Sigmoid colon (tissue), 7 donors: ENCODE measurements at regions of chr13 and their contacts with region 1.

Region 1: DNA sequence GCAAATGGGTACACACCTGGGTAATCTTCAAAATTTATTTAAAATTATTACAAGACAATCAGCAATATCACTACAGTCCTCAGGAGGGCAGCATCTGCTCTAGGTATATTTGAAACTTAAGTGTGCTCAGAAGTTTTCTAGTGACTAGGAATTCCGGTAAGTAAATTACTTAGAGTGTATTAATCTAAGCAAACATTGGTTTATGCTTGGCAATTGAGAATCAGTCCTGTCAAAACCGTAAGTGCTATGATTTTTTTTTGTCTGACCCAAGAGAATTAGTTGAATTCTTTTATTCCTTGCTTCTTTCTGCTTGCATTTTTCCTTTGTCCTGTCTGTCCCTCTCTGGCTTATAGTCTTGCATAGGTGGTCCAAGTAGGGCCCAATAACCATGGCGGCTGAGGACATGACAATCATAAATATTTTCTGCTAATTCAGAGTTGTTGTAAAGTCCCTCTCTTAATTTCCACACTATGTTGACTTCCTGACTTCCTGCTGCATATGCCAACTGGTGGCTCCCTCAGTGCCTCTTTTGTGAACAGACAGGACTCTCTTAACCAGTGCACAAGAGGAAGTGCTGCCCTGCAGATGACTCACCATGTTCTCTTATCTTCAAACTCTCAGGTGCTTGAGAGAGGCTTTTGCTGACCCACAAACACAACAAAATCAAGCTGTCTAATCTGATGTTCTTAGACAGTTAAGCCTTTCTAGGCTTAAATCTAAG is 82.2 kb downstream of the SLAIN1 start:
- DNase-seq: no peak
- H3K4me3 ChIP-seq: no peak overlapping the region
- H3K27ac ChIP-seq: no peak overlapping the region
- H3K4me1 ChIP-seq: no peaks in the 10 kb centered on the region
- H3K27me3 ChIP-seq: no peaks in the 10 kb centered on the region
- CTCF ChIP-seq: peak in 3 of 4 experiments; percentile 32 to 49 (median 37)
- EP300 ChIP-seq: no peak
- POLR2A ChIP-seq: no peak

Region 2: DNA sequence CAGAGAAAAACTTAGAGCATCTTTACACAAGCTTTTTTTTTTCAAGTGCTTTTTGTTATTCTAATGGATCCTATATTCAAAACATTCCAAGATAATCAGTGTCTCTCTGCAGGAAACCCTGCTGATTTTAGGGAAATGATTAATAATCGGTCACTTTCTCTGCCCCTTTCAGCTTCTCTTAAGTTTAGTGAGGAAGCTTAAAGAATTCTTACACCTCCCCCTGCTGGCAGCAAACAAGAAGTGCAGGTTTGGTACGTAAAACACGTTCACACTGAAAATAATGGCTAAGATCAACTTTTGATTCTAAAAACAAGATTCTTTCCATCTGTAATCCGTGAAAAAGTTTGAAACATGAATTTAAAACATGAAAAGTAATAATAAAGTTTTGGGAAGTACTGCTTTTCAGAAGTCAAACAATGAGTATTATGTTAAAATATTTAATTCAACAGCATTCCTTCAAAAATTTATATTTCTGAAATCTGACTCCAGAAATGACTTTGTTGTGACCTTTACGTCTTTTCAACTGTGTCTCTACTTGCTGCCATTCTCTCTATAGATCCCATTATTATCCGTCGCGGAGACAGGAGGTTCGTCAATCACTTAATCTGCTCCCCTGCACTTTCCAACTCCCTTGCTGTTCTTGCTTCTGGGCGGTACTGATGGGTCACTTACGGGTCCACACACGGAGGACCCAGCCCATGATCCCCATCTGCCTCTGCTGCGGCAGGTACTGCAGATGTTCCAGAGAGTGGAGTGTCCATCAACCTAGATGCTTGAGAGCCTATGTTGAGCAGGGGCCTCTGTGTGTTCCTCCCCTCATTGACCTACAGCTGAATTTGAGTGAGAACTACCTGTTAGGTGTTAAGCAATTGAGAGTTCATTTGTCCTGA is 342.0 kb after region 1 on chr13:
- intact Hi-C with region 1: loop called (anchors 2 kb)
- DNase-seq: no peak
- H3K4me3 ChIP-seq: no peak overlapping the region
- H3K27ac ChIP-seq: no peak overlapping the region
- H3K4me1 ChIP-seq: peaks cover 0 to 5% (median 0%) of the 10 kb centered on the region in 4 donors
- H3K27me3 ChIP-seq: peaks cover 0 to 3% (median 0%) of the 10 kb centered on the region in 3 donors
- CTCF ChIP-seq: peak; percentile 32 to 72 (median 64)
- EP300 ChIP-seq: no peak
- POLR2A ChIP-seq: no peak